Transverse colon (tissue), 4 donors: ENCODE measurements at regions of chr15 and their contacts with region 1.

Region 1: DNA sequence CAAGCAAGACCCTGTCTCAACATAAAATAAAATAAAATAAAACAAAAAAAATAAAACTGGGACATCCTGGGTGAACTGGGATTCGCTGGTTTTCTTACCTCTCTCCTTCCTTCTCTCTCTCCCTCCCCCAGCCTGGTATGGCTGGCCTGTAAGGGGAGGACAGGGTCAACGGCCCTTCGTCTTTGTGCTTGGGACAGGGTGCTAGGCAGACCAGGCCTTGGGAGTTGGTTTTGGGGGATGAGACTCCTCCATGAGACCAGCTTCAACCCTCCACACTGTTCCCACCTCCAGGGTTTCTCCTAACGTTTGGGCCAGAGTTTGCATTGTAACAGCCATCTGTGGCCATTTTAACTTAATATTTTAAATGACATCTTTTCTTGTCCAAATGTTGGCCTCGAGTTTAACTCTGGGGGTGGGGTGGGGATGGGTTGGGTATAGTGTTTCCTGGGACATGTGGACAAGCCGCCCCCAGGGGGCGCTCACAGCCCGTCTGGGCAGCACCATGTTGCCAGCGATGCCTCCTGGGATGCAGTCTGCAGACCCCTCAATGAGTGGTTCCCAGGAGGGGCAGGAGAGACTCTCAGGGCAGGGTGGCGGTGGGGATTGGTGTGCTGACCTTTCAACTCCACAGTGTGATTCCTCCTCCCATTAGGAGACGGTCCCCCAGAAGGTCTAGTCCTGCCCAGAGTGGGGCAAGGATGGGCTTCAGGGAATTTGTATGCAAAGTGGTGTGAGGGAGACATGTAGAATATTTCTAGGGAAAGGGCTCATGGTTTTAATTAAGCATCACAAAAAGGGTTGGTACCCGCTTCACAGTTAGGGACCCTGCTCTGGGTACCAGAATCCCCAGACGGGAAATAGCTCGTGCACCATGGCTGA is 37.7 kb upstream of the LCTL start:
- DNase-seq: peak; percentile 67
- H3K4me3 ChIP-seq: no peak overlapping the region
- H3K27ac ChIP-seq: no peak overlapping the region
- H3K4me1 ChIP-seq: no peaks in the 10 kb centered on the region
- H3K27me3 ChIP-seq: no peaks in the 10 kb centered on the region
- CTCF ChIP-seq: peak; percentile 68 to 87 (median 83)
- EP300 ChIP-seq: no peak
- POLR2A ChIP-seq: no peak

Region 2: GRCh38 chr15:66650434-66650833 is 46.9 kb after region 1 on chr15:
- in situ Hi-C with region 1: no loop called
- intact Hi-C with region 1: no loop called
- DNase-seq: no peak
- H3K4me3 ChIP-seq: no peak overlapping the region
- H3K27ac ChIP-seq: no peak overlapping the region
- H3K4me1 ChIP-seq: peaks cover 0 to 9% (median 7%) of the 10 kb centered on the region in 4 donors
- H3K27me3 ChIP-seq: peaks cover 5% of the 10 kb centered on the region
- CTCF ChIP-seq: no peak
- EP300 ChIP-seq: no peak
- POLR2A ChIP-seq: no peak

Region 3: DNA sequence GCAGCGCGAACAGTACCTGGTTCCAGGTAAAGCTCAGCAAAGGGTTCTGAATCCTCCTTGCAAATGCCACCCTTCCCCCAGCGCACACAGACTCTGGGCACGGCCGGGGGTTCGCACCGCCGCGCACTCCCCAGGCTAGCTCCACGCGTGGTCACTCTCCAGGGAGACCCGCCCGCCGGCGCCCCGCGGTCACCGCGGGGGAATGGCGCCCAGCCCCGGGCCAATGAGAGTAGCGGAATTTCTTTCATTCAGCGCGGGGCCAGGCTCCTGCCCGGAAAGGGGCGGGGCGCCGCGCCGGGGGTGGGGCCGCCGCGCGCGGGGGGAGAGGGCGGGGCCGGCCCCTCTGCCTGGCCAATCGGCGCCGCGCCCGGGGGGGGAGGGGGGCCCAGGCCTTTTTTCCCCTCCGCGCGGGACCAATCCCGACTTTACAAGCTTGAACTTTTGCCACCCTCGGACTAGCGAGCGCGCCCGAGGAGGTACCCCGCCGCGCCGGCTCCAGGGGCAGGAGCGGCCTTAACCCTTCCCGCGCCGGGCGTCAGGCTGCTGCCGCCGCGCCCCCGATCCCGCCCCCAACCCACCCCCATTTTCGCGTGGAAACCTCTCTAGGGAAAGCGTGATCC is 97.4 kb after region 1 on chr15:
- in situ Hi-C with region 1: loop called in 1 of 4 experiments (anchors 10 kb)
- intact Hi-C with region 1: no loop called
- DNase-seq: peak; percentile 97
- H3K4me3 ChIP-seq: peak overlapping the region; percentile 59 to 78 (median 73)
- H3K27ac ChIP-seq: peak overlapping the region; percentile 84 to 92 (median 91)
- H3K4me1 ChIP-seq: peaks cover 3 to 39% (median 31%) of the 10 kb centered on the region in 4 donors
- H3K27me3 ChIP-seq: no peaks in the 10 kb centered on the region
- CTCF ChIP-seq: no peak
- EP300 ChIP-seq: no peak
- POLR2A ChIP-seq: no peak

Region 4: DNA sequence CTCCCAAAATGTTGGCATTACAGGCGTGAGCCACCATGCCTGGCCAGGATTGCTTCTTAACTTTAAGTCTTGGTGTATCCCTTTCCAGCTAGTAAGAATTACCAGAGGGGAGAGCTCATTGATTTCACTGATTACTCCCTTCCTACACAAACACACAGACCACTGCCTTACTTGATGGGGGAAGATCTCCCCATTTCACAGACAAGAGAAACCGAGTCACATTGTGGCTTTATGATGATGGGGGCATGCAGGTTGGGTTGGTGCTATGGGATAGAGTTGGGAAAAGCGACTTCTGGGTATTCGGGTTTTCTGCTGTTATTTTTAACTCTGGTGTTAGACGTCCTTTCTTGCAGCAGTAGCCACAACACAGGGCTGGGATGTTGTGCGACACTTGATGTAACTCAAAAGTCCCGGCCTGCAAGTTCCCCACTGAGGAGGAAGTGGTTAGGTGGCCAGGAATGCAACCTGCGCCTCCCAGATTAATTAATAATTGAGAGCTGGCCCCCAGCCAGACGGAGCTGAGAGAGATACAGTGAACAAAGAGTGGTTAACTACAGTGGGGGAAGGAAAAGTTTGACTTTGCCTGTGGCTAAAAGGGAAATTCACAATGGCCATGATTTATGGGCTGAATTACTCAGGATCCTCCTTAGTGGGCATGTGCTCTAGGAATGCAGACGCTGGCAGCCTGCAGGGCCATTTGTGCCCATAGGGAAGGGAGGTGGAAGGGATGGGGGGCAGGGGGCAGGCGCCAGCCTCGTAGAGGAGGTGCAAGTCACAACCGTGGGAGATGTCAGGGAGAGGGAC is 162.1 kb after region 1 on chr15:
- in situ Hi-C with region 1: loop called in 2 of 4 experiments (anchors 10 to 25 kb)
- intact Hi-C with region 1: no loop called
- DNase-seq: peak; percentile 67
- H3K4me3 ChIP-seq: no peak overlapping the region
- H3K27ac ChIP-seq: peak overlapping the region; percentile 20 to 59 (median 36)
- H3K4me1 ChIP-seq: peaks cover 36 to 67% (median 47%) of the 10 kb centered on the region in 4 donors
- H3K27me3 ChIP-seq: no peaks in the 10 kb centered on the region
- CTCF ChIP-seq: peak in 1 of 5 experiments; percentile 10
- EP300 ChIP-seq: no peak
- POLR2A ChIP-seq: no peak

Region 5: DNA sequence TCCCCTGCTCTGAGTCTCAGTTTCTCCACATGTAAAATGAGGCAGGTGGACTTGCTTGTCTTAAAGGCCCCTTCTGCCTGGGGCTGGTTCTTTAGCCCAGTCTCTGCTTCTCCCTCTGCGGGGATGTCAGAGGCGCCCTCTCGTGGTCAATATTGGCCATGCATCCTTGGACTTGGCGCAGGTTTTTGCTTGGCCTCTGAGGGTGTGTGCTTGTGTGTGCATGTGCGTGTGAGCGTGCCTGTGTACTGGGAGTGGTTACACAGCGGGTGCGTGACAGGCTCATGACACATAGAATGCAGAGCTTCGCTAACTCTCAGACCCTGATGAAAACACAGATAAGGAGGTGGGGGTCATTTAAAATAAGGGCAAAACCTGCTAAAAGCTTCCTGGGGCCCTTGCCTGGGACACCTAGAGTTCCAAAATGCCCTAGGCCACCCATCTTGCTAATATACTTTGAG is 259.4 kb after region 1 on chr15:
- in situ Hi-C with region 1: loop called (anchors 10 kb)
- intact Hi-C with region 1: no loop called
- DNase-seq: peak; percentile 87
- H3K4me3 ChIP-seq: no peak overlapping the region
- H3K27ac ChIP-seq: no peak overlapping the region
- H3K4me1 ChIP-seq: peaks cover 0 to 10% (median 2%) of the 10 kb centered on the region in 4 donors
- H3K27me3 ChIP-seq: no peaks in the 10 kb centered on the region
- CTCF ChIP-seq: peak; percentile 85 to 95 (median 92)
- EP300 ChIP-seq: no peak
- POLR2A ChIP-seq: no peak